ENCODE measurements at regions of chr2 and their contacts with region 1.

Region 1: DNA sequence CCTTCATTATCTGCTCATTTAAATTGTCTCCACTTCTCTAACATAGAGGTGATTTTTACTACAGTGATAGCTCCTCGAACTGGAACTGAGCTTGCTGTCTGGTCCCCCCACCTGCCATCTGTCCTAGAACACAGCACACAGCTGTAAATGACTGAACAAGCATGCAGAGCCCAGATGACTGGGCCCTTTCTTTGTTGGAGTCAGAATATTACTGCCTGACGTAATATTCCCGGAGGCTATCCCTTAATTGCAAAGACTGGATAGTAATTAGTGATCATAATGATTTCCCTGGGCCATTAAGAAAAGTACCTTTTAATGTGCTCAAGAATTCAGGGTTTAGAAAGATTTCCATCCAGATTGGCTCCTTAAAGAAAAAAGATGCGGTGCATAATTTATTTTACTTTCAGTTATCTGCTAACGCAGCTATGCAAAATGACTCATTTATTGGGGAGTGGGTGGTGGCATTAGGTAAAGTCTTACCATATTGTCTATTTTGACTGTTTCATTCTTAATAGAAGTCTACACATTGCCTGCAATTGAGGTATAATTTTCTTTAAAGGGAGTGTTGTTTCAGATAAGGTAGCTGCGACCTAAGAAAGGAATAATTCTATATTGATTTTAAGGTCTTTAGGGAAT is 84.4 kb downstream of the MAP4K4 start:
- DNase-seq: no peak
- H3K4me3 ChIP-seq: no peak overlapping the region
- H3K27ac ChIP-seq: peak overlapping the region in 1 of 2 experiments; percentile 40; a peak in 1 of 4 replicates
- H3K4me1 ChIP-seq: peaks cover 24 to 26% of the 10 kb centered on the region in 2 experiments
- H3K27me3 ChIP-seq: no peaks in the 10 kb centered on the region
- CTCF ChIP-seq: no peak
- EP300 ChIP-seq: no peak
- RAD21 ChIP-seq: no peak

Region 2: DNA sequence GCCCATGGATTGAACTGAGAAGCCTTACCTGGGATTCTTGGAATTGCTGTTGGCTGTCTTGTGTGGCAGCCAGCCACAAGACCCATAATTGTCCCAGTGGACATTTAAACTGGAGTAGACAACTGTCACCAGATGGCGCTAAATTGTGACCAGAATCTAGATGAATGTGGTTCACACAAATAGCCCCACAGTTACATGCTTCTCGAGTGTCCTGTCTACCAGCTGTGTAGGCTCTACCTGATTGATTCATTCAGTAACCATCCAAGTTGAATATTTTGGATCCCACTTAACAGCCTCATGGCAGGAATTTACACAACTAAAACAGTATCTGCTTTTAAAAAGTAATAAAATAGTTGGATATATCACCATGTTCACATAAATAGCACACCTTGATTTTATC is 11.2 kb before region 1 on chr2:
- CTCF ChIA-PET with region 1: interaction called, 13 read pairs
- POLR2A ChIA-PET with region 1: no interaction called
- DNase-seq: peak; percentile 41
- H3K4me3 ChIP-seq: no peak overlapping the region
- H3K27ac ChIP-seq: peak overlapping the region; percentile 8 to 19; a peak in 2 of 4 replicates
- H3K4me1 ChIP-seq: peaks cover 26 to 56% of the 10 kb centered on the region in 2 experiments
- H3K27me3 ChIP-seq: no peaks in the 10 kb centered on the region
- CTCF ChIP-seq: peak; percentile 57
- EP300 ChIP-seq: no peak
- RAD21 ChIP-seq: peak; percentile 57

Region 3: GRCh38 chr2:101815739-101816391 is 34.0 kb after region 1 on chr2:
- CTCF ChIA-PET with region 1: no interaction called
- POLR2A ChIA-PET with region 1: no interaction called
- DNase-seq: no peak
- H3K4me3 ChIP-seq: no peak overlapping the region
- H3K27ac ChIP-seq: peak overlapping the region; percentile 18 to 53; a peak in 2 of 4 replicates
- H3K4me1 ChIP-seq: peaks cover 43 to 51% of the 10 kb centered on the region in 2 experiments
- H3K27me3 ChIP-seq: no peaks in the 10 kb centered on the region
- CTCF ChIP-seq: no peak
- EP300 ChIP-seq: no peak
- RAD21 ChIP-seq: no peak

Measured in SK-N-SH (cell line).